Mammary epithelial cell (primary cell): ENCODE measurements at regions of chr14 and their contacts with region 1.

Region 1: GRCh38 chr14:74223016-74223415 is 16.2 kb upstream of the VSX2 start:
- DNase-seq: no peak
- H3K4me3 ChIP-seq: no peak overlapping the region
- H3K27ac ChIP-seq: no peak overlapping the region
- H3K4me1 ChIP-seq: no peaks in the 10 kb centered on the region
- H3K27me3 ChIP-seq: peaks cover 5% of the 10 kb centered on the region
- CTCF ChIP-seq: no peak

Region 2: GRCh38 chr14:74161526-74162158 is 61.4 kb before region 1 on chr14:
- CTCF ChIA-PET with region 1: no interaction called
- dilution Hi-C with region 1: loop called (anchors 10 kb)
- in situ Hi-C with region 1: no loop called
- intact Hi-C with region 1: no loop called
- DNase-seq: no peak
- H3K4me3 ChIP-seq: no peak overlapping the region
- H3K27ac ChIP-seq: no peak overlapping the region
- H3K4me1 ChIP-seq: no peaks in the 10 kb centered on the region
- H3K27me3 ChIP-seq: no peaks in the 10 kb centered on the region
- CTCF ChIP-seq: no peak

Region 3: GRCh38 chr14:74514471-74514941 is 291.5 kb after region 1 on chr14:
- CTCF ChIA-PET with region 1: no interaction called
- dilution Hi-C with region 1: no loop called
- in situ Hi-C with region 1: no loop called
- intact Hi-C with region 1: no loop called
- DNase-seq: peak; percentile 98
- H3K4me3 ChIP-seq: no peak overlapping the region
- H3K27ac ChIP-seq: peak overlapping the region; percentile 81
- H3K4me1 ChIP-seq: peaks cover 77% of the 10 kb centered on the region
- H3K27me3 ChIP-seq: no peaks in the 10 kb centered on the region
- CTCF ChIP-seq: no peak